ENCODE measurements at regions of chr3 and their contacts with region 1.

Region 1: GRCh38 chr3:150041877-150042276 is 71.2 kb upstream of the PFN2 start:
- DNase-seq: no peak
- ATAC-seq: no peak
- H3K4me3 ChIP-seq: no peak overlapping the region
- H3K4me3 Mint-ChIP-seq: no peak overlapping the region
- H3K27ac ChIP-seq: no peak overlapping the region
- H3K27ac Mint-ChIP-seq: no peak overlapping the region
- H3K4me1 ChIP-seq: no peaks in the 10 kb centered on the region
- H3K4me1 Mint-ChIP-seq: no peaks in the 10 kb centered on the region
- H3K27me3 ChIP-seq: peaks cover 0 to 4% of the 10 kb centered on the region in 2 experiments
- H3K27me3 Mint-ChIP-seq: peaks cover 6 to 12% of the 10 kb centered on the region in 2 donors

Region 2: GRCh38 chr3:148600902-148601765 is 1440.7 kb before region 1 on chr3:
- CTCF ChIA-PET with region 1: no interaction called
- POLR2A ChIA-PET with region 1: interaction called in 1 of 2 experiments, 14 read pairs
- DNase-seq: no peak
- ATAC-seq: no peak
- H3K4me3 ChIP-seq: no peak overlapping the region
- H3K4me3 Mint-ChIP-seq: no peak overlapping the region
- H3K27ac ChIP-seq: no peak overlapping the region
- H3K27ac Mint-ChIP-seq: no peak overlapping the region
- H3K4me1 ChIP-seq: no peaks in the 10 kb centered on the region
- H3K4me1 Mint-ChIP-seq: no peaks in the 10 kb centered on the region
- H3K27me3 ChIP-seq: no peaks in the 10 kb centered on the region
- H3K27me3 Mint-ChIP-seq: no peaks in the 10 kb centered on the region

Region 3: DNA sequence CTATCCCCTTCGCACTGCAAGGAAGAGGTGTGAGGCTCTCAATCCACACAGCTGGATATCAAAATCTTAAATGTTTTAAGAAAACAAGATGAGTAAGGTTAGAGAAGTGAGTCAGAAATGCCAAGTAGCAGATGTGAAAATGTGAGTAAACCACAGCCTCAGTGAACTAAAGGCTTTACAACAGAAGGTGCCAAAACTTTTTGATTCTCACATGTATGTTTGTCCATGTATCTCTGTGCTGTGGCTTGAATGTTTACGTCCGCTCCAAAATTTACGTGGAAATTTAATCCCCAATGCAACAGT is 55.7 kb after region 1 on chr3:
- CTCF ChIA-PET with region 1: no interaction called
- POLR2A ChIA-PET with region 1: no interaction called
- DNase-seq: no peak
- ATAC-seq: no peak
- H3K4me3 ChIP-seq: no peak overlapping the region
- H3K4me3 Mint-ChIP-seq: no peak overlapping the region
- H3K27ac ChIP-seq: no peak overlapping the region
- H3K27ac Mint-ChIP-seq: no peak overlapping the region
- H3K4me1 ChIP-seq: no peaks in the 10 kb centered on the region
- H3K4me1 Mint-ChIP-seq: peaks cover 0 to 2% (median 0%) of the 10 kb centered on the region in 3 donors
- H3K27me3 ChIP-seq: peaks cover 0 to 4% of the 10 kb centered on the region in 2 experiments
- H3K27me3 Mint-ChIP-seq: peaks cover 5 to 19% of the 10 kb centered on the region in 2 donors

Region 4: GRCh38 chr3:150385296-150386242 is 343.7 kb after region 1 on chr3:
- CTCF ChIA-PET with region 1: no interaction called
- POLR2A ChIA-PET with region 1: no interaction called
- DNase-seq: peak in 4 of 35 experiments; percentile 1 to 47 (median 9)
- ATAC-seq: peak; percentile 12 to 49 (median 32)
- H3K4me3 ChIP-seq: peak overlapping the region; percentile 30 to 33
- H3K4me3 Mint-ChIP-seq: peak overlapping the region in 2 of 3 donors; percentile 61 to 75
- H3K27ac ChIP-seq: peak overlapping the region; percentile 32
- H3K27ac Mint-ChIP-seq: peak overlapping the region; percentile 18 to 62
- H3K4me1 ChIP-seq: peaks cover 6 to 14% of the 10 kb centered on the region in 2 experiments
- H3K4me1 Mint-ChIP-seq: peaks cover 17 to 29% (median 28%) of the 10 kb centered on the region in 3 donors
- H3K27me3 ChIP-seq: no peaks in the 10 kb centered on the region
- H3K27me3 Mint-ChIP-seq: no peaks in the 10 kb centered on the region

Measured in T-cell (primary cell).